ENCODE measurements at regions of chr15 and their contacts with region 1.

Region 1: GRCh38 chr15:57031605-57032004 is 113.2 kb downstream of the TCF12 start:
- DNase-seq: peak in 4 of 10 donors; percentile 52 to 67 (median 58)
- H3K4me3 ChIP-seq: peak overlapping the region in 42 of 59 donors; percentile 1 to 48 (median 23)
- H3K27ac ChIP-seq: peak overlapping the region; percentile 30 to 97 (median 91)
- H3K27me3 ChIP-seq: no peaks in the 10 kb centered on the region
- CTCF ChIP-seq: peak in 1 of 56 donors; percentile 10

Region 2: GRCh38 chr15:57070651-57071050 is 39.0 kb after region 1 on chr15:
- intact Hi-C with region 1: loop called in 1 of 2 experiments (anchors 5 kb)
- DNase-seq: no peak
- H3K4me3 ChIP-seq: no peak overlapping the region
- H3K27ac ChIP-seq: peak overlapping the region in 41 of 59 donors; percentile 0 to 77 (median 49)
- H3K27me3 ChIP-seq: no peaks in the 10 kb centered on the region
- CTCF ChIP-seq: no peak